ENCODE measurements at regions of chr15 and their contacts with region 1.

Region 1: DNA sequence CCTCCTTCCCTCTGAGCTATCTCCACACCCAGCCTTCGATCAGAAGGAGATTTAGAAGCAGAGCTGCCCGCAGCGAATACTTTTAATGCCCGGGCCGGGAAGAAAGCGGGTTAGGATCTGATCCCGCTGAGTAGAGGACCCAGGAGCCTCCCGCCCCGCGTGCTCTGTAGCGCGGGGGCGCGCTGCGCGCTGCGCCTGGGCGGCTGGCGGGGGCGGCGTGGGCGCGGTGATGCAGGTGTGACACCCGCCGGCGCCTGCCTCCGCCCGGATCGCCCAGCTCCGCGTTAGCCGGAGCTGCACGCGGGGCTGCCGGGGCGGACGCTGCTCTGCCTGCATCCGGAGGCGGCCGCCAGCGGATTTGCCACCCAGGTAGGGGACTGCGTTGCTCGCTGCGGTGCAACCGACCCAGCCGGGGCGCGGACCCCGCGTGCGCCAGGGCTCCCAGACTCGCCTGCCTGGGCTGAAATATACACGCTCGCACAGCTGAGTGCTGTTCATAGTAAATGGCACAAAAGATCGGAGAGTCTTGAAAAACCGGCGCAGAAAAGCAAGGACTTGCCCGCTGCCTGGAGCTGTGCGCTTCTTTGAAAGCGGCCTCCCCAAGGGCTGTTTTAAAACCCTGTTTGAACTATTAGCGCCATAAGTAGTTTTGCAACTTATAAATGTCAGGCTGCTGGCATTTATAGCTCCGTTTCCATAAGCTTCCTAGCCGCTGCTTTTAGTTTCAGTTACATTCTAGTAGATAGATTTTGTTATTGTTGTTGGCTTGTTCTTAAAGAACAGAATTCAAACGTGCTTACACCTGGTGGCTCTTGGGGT is at the start of gene SV2B:
- DNase-seq: peak in 1 of 2 experiments; percentile 17
- H3K4me3 ChIP-seq: peak within 1 kb of the TSS; percentile 26
- H3K4me3 Mint-ChIP-seq: peak within 1 kb of the TSS; percentile 69
- H3K27ac Mint-ChIP-seq: no peak within 1 kb of the TSS
- H3K4me1 ChIP-seq: peaks cover 6% of the 10 kb centered on the region; the same call in 1 of the 2 replicates
- H3K4me1 Mint-ChIP-seq: no peaks in the 10 kb centered on the region
- H3K27me3 ChIP-seq: peaks cover 6% of the 10 kb centered on the region
- H3K27me3 Mint-ChIP-seq: peaks cover 47% of the 10 kb centered on the region
- CTCF ChIP-seq: no peak
- total RNA-seq, gene SV2B: not detected in 2 replicates

Region 2: DNA sequence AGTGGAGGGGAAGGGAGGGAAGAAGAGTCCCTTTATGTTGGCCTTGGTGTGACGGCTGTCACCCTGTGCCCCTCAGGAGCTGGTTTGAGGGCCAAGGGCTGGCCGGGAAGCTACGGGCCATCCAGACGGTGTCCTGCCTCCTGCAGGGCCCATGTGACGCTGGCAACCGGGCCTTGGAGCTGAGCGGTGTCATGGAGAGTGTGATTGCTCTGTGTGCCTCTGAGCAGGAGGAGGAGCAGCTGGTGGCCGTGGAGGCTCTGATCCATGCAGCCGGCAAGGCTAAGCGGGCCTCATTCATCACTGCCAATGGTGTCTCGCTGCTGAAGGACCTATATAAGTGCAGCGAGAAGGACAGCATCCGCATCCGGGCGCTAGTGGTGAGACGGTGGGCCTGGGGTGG is 153.7 kb before region 1 on chr15:
- CTCF ChIA-PET with region 1: no interaction called
- POLR2A ChIA-PET with region 1: no interaction called
- intact Hi-C with region 1: no loop called
- DNase-seq: no peak
- H3K4me3 ChIP-seq: no peak overlapping the region
- H3K4me3 Mint-ChIP-seq: no peak overlapping the region
- H3K27ac Mint-ChIP-seq: no peak overlapping the region
- H3K4me1 ChIP-seq: no peaks in the 10 kb centered on the region
- H3K4me1 Mint-ChIP-seq: no peaks in the 10 kb centered on the region
- H3K27me3 ChIP-seq: no peaks in the 10 kb centered on the region
- H3K27me3 Mint-ChIP-seq: no peaks in the 10 kb centered on the region
- CTCF ChIP-seq: no peak

Region 3: GRCh38 chr15:91114301-91114700 is 14.1 kb after region 1 on chr15:
- CTCF ChIA-PET with region 1: interaction called, 10 read pairs
- POLR2A ChIA-PET with region 1: no interaction called
- intact Hi-C with region 1: no loop called
- DNase-seq: no peak
- H3K4me3 ChIP-seq: no peak overlapping the region
- H3K4me3 Mint-ChIP-seq: no peak overlapping the region
- H3K27ac Mint-ChIP-seq: no peak overlapping the region
- H3K4me1 ChIP-seq: no peaks in the 10 kb centered on the region
- H3K4me1 Mint-ChIP-seq: no peaks in the 10 kb centered on the region
- H3K27me3 ChIP-seq: no peaks in the 10 kb centered on the region
- H3K27me3 Mint-ChIP-seq: peaks cover 18% of the 10 kb centered on the region
- CTCF ChIP-seq: no peak

Region 4: DNA sequence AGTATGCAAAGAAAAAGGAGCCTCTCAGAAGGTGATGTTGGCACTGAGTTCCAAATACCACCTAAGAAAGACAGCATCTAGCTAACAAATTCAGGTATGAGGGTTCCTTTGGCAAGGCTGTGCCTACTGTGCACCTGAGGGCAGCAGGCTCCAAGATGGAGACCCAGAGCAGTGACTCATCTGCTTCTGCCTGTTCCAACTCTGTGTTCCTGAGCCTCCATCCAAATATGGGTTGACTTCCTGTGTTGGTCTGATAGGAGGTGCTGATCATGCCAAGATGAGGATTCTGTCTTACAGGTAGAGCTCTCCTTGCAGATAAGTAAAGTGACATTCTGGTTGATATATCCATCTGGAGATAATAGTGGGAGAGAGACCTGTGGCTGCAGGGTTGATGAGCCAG is 25.9 kb after region 1 on chr15:
- CTCF ChIA-PET with region 1: no interaction called
- POLR2A ChIA-PET with region 1: no interaction called
- intact Hi-C with region 1: no loop called
- DNase-seq: no peak
- H3K4me3 ChIP-seq: no peak overlapping the region
- H3K4me3 Mint-ChIP-seq: no peak overlapping the region
- H3K27ac Mint-ChIP-seq: no peak overlapping the region
- H3K4me1 ChIP-seq: no peaks in the 10 kb centered on the region
- H3K4me1 Mint-ChIP-seq: no peaks in the 10 kb centered on the region
- H3K27me3 ChIP-seq: no peaks in the 10 kb centered on the region
- H3K27me3 Mint-ChIP-seq: no peaks in the 10 kb centered on the region
- CTCF ChIP-seq: no peak

Region 5: DNA sequence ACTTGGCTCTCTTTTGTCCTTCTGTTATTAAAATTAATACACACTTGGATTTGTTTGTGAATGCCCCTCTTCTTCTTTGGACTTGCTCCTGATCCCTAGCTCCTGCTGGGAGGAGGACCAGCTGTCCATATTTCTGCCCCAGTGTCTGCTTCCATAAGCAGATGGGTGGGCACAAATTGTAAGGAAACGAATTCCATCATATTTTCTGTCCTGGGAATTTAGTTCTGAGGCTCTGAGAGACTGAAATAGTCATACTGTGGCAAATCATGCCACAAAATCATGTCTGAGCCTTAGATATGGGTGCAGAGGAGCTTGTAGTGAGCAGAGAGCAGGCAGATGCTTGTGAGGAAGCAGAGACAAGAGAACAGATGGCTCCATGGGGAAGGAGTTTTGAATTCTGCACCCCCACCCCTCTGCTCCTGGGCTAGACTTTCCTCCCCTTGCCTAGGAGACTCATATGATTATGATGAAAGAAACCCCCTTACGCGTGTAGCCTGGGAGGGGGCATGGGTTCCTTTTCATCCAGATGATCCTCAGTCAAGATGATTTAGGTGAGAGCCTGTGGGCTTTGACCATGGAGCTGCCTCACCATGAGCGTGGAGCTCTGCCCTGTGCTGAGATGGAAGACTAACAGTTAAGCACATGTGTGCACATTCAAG is 50.4 kb after region 1 on chr15:
- CTCF ChIA-PET with region 1: no interaction called
- POLR2A ChIA-PET with region 1: no interaction called
- intact Hi-C with region 1: no loop called
- DNase-seq: no peak
- H3K4me3 ChIP-seq: no peak overlapping the region
- H3K4me3 Mint-ChIP-seq: no peak overlapping the region
- H3K27ac Mint-ChIP-seq: no peak overlapping the region
- H3K4me1 ChIP-seq: no peaks in the 10 kb centered on the region
- H3K4me1 Mint-ChIP-seq: no peaks in the 10 kb centered on the region
- H3K27me3 ChIP-seq: no peaks in the 10 kb centered on the region
- H3K27me3 Mint-ChIP-seq: peaks cover 16% of the 10 kb centered on the region
- CTCF ChIP-seq: no peak

Measured in Caco-2 (cell line).